ENCODE measurements at regions of chr22 and their contacts with region 1.

Region 1: DNA sequence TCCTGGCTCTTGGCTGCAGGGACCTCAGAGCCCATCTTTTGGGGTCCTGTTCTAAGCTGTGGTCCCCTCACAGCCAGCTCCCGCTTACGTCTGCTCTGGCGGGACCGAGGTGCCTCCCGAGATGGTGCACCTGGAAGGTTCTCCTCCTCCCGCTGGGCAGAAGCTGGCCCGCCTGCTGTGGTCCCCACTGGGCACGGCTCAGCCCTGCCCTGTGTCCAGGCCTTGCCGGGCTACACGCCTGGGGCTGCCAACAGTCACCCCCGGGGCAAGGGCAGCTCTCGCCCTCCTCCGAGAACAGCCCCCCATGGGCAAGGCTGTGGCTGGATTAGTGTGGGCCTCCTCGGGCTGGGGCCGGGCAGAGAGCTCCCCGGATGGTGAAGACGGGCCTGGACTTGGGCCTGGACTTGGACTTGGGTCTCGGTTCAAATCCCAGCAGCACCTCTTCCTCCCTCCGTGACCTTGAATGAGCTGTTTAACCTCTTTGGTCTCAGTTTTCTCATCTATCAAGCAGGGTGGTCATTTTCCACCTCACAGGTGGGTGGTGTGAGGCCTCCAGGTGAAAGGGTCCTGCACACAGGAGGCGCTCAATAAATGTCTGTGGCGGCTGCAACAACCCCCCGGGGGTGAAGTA is 998 bp downstream of the BAIAP2L2 start:
- DNase-seq: peak in 1 of 2 experiments; percentile 35
- H3K4me3 ChIP-seq: no peak overlapping the region
- H3K27ac ChIP-seq: no peak overlapping the region
- H3K4me1 ChIP-seq: peaks cover 14% of the 10 kb centered on the region
- H3K27me3 ChIP-seq: no peaks in the 10 kb centered on the region
- CTCF ChIP-seq: no peak

Region 2: GRCh38 chr22:37686002-37686982 is 423.2 kb before region 1 on chr22 and contains the start of gene NOL12:
- CTCF ChIA-PET with region 1: no interaction called
- POLR2A ChIA-PET with region 1: no interaction called
- intact Hi-C with region 1: no loop called
- DNase-seq: peak; percentile 83 to 86
- H3K4me3 ChIP-seq: peak within 1 kb of the TSS; percentile 94
- H3K27ac ChIP-seq: peak within 1 kb of the TSS; percentile 59
- H3K4me1 ChIP-seq: peaks cover 47% of the 10 kb centered on the region
- H3K27me3 ChIP-seq: no peaks in the 10 kb centered on the region
- CTCF ChIP-seq: 0 out of 2 replicates have a peak, but pooled peaks have one; percentile 26
- total RNA-seq, gene NOL12: 42.1 and 44.3 TPM in 2 replicates

Region 3: DNA sequence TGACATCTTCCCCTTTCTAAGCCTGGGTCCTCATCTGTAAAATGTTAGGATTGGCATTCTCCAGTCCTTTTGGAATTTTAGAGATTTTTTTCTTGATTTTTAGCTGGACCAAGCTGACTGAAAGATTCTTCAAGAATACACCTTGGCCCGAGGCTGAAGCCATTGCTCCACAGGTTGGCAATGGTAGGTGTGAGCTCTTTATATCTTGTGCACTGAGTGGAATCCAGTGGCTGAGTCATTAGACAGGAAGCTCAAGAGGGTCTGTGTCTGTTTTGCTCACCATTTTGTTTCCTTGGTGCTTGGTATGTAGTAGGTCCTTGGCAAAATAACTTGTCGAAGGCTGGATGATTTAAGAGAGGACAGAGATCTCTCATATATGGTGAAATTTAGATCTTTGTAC is 254.0 kb before region 1 on chr22:
- CTCF ChIA-PET with region 1: no interaction called
- POLR2A ChIA-PET with region 1: no interaction called
- intact Hi-C with region 1: no loop called
- DNase-seq: no peak
- H3K4me3 ChIP-seq: no peak overlapping the region
- H3K27ac ChIP-seq: no peak overlapping the region
- H3K4me1 ChIP-seq: peaks cover 6% of the 10 kb centered on the region
- H3K27me3 ChIP-seq: no peaks in the 10 kb centered on the region
- CTCF ChIP-seq: no peak

Region 4: DNA sequence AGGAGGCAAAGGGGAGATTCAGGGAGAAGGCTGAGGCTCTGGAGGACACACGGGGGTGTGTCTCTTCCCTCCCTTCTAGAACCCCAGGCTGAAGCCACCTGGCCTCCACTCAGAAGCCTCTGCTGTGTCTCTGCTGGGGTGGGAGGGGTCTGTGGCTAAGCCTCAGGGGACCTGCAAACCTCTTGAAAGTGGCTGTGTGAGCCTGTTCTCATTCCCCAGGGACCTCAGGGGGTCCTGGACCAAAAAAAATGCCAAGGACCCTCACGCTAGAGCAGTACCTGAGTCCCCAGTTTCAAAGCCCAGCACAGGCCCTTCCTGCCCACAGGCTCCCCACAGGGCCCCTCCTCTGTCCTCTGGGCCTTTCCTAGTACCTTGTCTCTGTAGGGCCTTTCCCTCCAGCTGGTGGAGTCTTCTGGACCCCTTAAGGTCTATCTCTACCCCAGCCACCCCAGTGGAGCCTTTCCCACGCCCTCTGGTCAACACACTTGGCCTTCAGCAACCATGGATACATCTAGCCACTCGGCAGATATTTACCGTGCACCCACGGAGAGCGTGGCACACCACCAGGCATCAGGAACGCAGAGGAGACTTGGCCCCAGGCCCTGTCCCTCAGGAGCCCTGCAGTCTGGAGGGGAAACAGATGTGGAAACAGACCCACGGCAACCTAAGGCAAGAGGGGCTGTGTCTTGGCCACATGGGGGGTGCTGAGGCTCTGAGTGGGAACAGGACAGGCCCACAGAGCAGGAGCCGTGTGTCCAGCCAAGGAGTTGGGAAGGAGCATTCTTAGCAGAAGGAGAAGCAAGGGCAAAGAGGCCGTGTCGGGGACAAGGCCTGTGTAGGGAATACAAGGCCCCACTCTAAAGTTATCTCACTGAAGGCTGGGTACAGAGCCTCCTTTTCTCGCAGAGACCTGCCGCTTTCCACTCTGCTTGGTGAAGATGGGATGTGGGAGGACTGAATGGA is 53.7 kb after region 1 on chr22:
- CTCF ChIA-PET with region 1: no interaction called
- POLR2A ChIA-PET with region 1: interaction called, 10 read pairs
- intact Hi-C with region 1: no loop called
- DNase-seq: no peak
- H3K4me3 ChIP-seq: no peak overlapping the region
- H3K27ac ChIP-seq: no peak overlapping the region
- H3K4me1 ChIP-seq: peaks cover 17% of the 10 kb centered on the region
- H3K27me3 ChIP-seq: no peaks in the 10 kb centered on the region
- CTCF ChIP-seq: no peak